Breast epithelium (tissue), 4 donors: ENCODE measurements at regions of chr3 and their contacts with region 1.

Region 1: DNA sequence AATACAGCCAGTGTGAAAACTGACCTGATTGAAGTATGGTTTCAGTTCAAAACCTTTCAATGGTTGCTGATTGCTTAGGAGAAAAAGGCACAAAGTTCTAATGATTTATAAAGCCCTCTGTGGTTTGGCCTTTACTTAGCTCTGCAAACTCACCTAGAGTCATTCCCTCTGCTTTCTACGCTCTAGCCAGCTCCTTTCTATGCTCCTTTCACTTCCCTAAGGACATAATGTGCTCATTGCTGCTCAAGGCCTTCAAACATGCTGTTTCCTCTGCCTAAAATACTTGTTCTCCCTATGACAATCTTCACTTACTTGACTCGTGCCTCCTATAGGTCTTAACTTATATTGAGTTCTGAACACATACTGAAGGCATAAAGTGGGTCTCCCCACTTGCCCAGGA is 19.0 kb downstream of the RPL39L start:
- DNase-seq: no peak
- H3K4me3 ChIP-seq: no peak overlapping the region
- H3K27ac ChIP-seq: no peak overlapping the region
- H3K4me1 ChIP-seq: no peaks in the 10 kb centered on the region
- H3K27me3 ChIP-seq: no peaks in the 10 kb centered on the region
- CTCF ChIP-seq: no peak
- POLR2A ChIP-seq: no peak

Region 2: GRCh38 chr3:187172929-187173328 is 52.6 kb after region 1 on chr3:
- intact Hi-C with region 1: loop called (anchors 2 kb)
- DNase-seq: no peak
- H3K4me3 ChIP-seq: no peak overlapping the region
- H3K27ac ChIP-seq: peak overlapping the region; percentile 12 to 22
- H3K4me1 ChIP-seq: no peaks in the 10 kb centered on the region
- H3K27me3 ChIP-seq: no peaks in the 10 kb centered on the region
- CTCF ChIP-seq: no peak
- POLR2A ChIP-seq: no peak

Region 3: DNA sequence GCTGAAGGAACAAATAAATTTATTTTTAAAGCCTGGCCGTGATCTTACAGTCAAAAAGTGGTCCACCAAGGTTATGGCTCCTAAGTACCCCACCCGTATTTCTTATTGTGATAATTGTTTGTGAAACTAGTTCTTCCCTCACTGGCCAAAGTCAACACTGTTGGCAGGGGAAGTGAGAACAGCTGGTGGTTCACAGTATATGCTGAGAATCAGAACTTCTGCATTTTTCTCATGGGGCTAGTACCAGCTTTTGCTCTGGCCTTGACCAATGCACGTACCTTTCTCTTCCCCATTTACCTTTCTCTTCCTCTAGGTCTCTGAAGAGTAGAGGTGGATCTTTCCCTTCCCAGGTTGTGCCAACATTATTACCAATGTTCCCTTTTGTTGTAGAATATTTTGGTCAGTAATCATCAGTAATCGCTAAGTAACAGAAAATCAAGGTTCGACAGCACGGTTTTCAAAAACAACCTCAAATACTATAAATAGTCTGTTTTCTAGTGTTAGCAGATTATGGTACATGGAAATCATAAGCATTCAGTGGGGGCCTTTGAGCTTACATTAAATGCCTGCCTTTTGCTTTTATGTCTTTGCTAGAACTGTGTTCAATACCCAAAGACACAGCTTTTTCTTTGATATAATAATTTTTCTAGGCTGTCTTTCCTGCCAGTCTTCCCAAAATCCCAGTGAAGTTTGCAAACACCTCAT is 1301.7 kb after region 1 on chr3:
- intact Hi-C with region 1: no loop called
- DNase-seq: no peak
- H3K4me3 ChIP-seq: no peak overlapping the region
- H3K27ac ChIP-seq: peak overlapping the region in 1 of 2 donors; percentile 23
- H3K4me1 ChIP-seq: peaks cover 0 to 5% of the 10 kb centered on the region in 2 donors
- H3K27me3 ChIP-seq: no peaks in the 10 kb centered on the region
- CTCF ChIP-seq: no peak
- POLR2A ChIP-seq: no peak